Activated T-helper 2 cell treated with anti-CD3 and anti-CD28 coated beads, Interferon-gamma antibody, Interleukin-2, Interleukin-4, amounts not matched to agents 10 μg/mL and 5 μg/mL and 100 μg/mL, durations not matched to agents 14 hours and 24 hours and 36 hours (primary cell): ENCODE measurements at regions of chr10 and their contacts with region 1.

Region 1: GRCh38 chr10:74081192-74081803 is 69.3 kb downstream of the AP3M1 start:
- DNase-seq: no peak
- H3K4me3 Mint-ChIP-seq: no peak overlapping the region
- H3K27ac Mint-ChIP-seq: no peak overlapping the region
- H3K4me1 Mint-ChIP-seq: peaks cover 48% of the 10 kb centered on the region
- H3K27me3 Mint-ChIP-seq: no peaks in the 10 kb centered on the region

Region 2: GRCh38 chr10:74035303-74035702 is 46.0 kb before region 1 on chr10:
- intact Hi-C with region 1: loop called (anchors 5 kb)
- DNase-seq: no peak
- H3K4me3 Mint-ChIP-seq: no peak overlapping the region
- H3K27ac Mint-ChIP-seq: no peak overlapping the region
- H3K4me1 Mint-ChIP-seq: peaks cover 40% of the 10 kb centered on the region
- H3K27me3 Mint-ChIP-seq: no peaks in the 10 kb centered on the region

Region 3: GRCh38 chr10:74255888-74256357 is 174.6 kb after region 1 on chr10:
- intact Hi-C with region 1: no loop called
- DNase-seq: no peak
- H3K4me3 Mint-ChIP-seq: no peak overlapping the region
- H3K27ac Mint-ChIP-seq: no peak overlapping the region
- H3K4me1 Mint-ChIP-seq: peaks cover 9% of the 10 kb centered on the region
- H3K27me3 Mint-ChIP-seq: no peaks in the 10 kb centered on the region